Uterus (tissue), 4 donors: ENCODE measurements at regions of chr7 and their contacts with region 1.

Region 1: DNA sequence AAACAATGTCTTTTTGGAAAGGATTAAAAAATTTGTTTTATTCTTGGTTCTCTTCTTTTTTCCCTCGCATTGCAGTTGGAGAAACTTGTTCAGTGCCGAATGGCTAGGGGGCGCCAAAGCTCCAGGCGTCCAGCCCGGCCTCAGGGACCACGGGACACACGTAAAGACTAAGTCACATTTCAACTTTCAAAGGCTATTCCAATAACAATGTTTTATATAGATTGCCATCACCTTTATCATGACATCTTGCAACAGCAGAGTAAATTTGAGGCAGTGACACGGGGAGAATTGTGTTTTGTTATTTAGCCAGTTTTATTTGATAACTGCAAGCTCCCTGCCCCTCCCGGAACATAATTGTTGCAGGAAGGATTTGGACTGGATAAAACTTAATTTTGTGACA is 2.2 kb upstream of the IGFBP3 start:
- DNase-seq: peak; percentile 83 to 84
- H3K4me3 ChIP-seq: peak overlapping the region in 1 of 2 donors; percentile 76
- H3K27ac ChIP-seq: peak overlapping the region; percentile 69 to 89
- H3K4me1 ChIP-seq: no peaks in the 10 kb centered on the region
- H3K27me3 ChIP-seq: no peaks in the 10 kb centered on the region
- CTCF ChIP-seq: peak; percentile 67 to 96 (median 92)
- POLR2A ChIP-seq: no peak

Region 2: GRCh38 chr7:45663167-45663921 is 259.9 kb before region 1 on chr7:
- intact Hi-C with region 1: no loop called
- DNase-seq: no peak
- H3K4me3 ChIP-seq: no peak overlapping the region
- H3K27ac ChIP-seq: no peak overlapping the region
- H3K4me1 ChIP-seq: no peaks in the 10 kb centered on the region
- H3K27me3 ChIP-seq: no peaks in the 10 kb centered on the region
- CTCF ChIP-seq: peak in 1 of 4 experiments; percentile 19
- POLR2A ChIP-seq: no peak

Region 3: GRCh38 chr7:47088329-47089067 is 1165.2 kb after region 1 on chr7:
- intact Hi-C with region 1: loop called (anchors 5 kb)
- DNase-seq: peak; percentile 60 to 66
- H3K4me3 ChIP-seq: no peak overlapping the region
- H3K27ac ChIP-seq: no peak overlapping the region
- H3K4me1 ChIP-seq: no peaks in the 10 kb centered on the region
- H3K27me3 ChIP-seq: no peaks in the 10 kb centered on the region
- CTCF ChIP-seq: peak; percentile 79 to 84 (median 82)
- POLR2A ChIP-seq: no peak

Region 4: DNA sequence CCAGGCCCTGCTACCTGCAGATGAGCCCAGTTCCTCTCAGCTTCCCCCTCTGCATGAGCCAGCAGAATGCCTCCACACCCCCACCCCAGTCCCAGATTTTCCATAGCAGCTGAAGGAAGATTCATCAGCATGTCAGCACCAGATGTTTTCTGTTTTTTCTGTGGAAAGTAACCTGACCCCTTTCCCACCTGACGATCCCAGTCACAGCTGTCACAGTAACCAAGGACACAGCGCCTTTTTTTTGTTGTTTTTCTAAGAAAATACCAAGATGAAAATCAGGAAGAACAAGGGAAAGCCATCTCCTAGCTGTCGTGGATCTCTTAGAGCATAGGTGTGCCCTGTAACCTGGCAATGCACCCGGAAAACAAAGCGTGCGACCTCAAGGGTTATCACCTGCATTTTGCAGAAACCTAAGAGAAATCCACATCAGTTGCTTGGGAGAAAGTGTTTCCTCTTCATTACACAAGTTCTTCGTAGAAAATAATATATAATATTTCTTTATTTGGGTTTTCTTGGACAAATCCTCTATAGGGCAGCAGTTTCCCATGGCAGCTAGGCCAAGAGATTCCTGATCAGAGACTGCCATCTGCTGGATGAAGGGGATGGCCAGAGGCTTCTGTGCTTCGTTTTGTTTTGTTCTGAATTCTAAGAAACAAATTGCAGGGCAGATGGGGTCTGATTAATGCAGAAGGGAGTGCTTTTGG is 1256.7 kb after region 1 on chr7:
- intact Hi-C with region 1: loop called (anchors 10 kb)
- DNase-seq: peak; percentile 72 to 73
- H3K4me3 ChIP-seq: no peak overlapping the region
- H3K27ac ChIP-seq: peak overlapping the region; percentile 23 to 37
- H3K4me1 ChIP-seq: peaks cover 0 to 9% of the 10 kb centered on the region in 2 donors
- H3K27me3 ChIP-seq: no peaks in the 10 kb centered on the region
- CTCF ChIP-seq: peak; percentile 74 to 88 (median 86)
- POLR2A ChIP-seq: no peak